ENCODE measurements at regions of chr10 and their contacts with region 1.

Region 1: DNA sequence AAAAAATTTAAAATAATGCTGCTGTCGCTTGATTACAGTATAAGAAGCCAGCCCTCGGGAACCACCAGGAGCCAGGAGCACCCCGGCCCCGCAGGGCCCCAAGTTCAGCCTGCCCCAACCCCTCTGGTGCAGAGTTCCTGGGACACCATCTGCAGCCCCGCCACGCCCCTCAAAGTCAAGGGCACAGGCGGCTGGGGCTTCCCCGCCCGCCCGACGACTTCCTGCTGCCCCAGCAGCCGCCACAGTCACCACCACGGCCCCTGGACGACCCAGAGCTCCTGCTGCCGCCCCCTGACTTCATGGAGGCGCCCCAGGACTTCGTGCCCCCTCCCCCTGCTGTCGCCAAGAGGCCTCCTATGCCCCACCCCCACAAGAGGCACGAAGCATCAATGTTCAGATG is 103.6 kb upstream of the PDSS1 start:
- DNase-seq: no peak
- H3K4me3 ChIP-seq: no peak overlapping the region
- H3K4me3 Mint-ChIP-seq: no peak overlapping the region
- H3K27ac Mint-ChIP-seq: no peak overlapping the region
- H3K4me1 ChIP-seq: no peaks in the 10 kb centered on the region
- H3K4me1 Mint-ChIP-seq: no peaks in the 10 kb centered on the region
- H3K27me3 ChIP-seq: no peaks in the 10 kb centered on the region; the same call in 1 of the 2 replicates
- H3K27me3 Mint-ChIP-seq: peaks cover 26% of the 10 kb centered on the region
- CTCF ChIP-seq: no peak

Region 2: GRCh38 chr10:26627324-26627723 is 33.4 kb after region 1 on chr10:
- CTCF ChIA-PET with region 1: no interaction called
- POLR2A ChIA-PET with region 1: no interaction called
- intact Hi-C with region 1: loop called (anchors 5 kb)
- DNase-seq: peak in 1 of 2 experiments; percentile 30
- H3K4me3 ChIP-seq: no peak overlapping the region
- H3K4me3 Mint-ChIP-seq: no peak overlapping the region
- H3K27ac Mint-ChIP-seq: no peak overlapping the region
- H3K4me1 ChIP-seq: no peaks in the 10 kb centered on the region
- H3K4me1 Mint-ChIP-seq: no peaks in the 10 kb centered on the region
- H3K27me3 ChIP-seq: no peaks in the 10 kb centered on the region
- H3K27me3 Mint-ChIP-seq: peaks cover 39% of the 10 kb centered on the region
- CTCF ChIP-seq: peak; percentile 48 to 62

Measured in Caco-2 (cell line).